Thyroid gland (tissue), 4 donors: ENCODE measurements at regions of chr3 and their contacts with region 1.

Region 1: GRCh38 chr3:59049671-59050331 is at the start of gene CFAP20DC:
- DNase-seq: peak; percentile 88
- H3K4me3 ChIP-seq: peak within 1 kb of the TSS; percentile 3 to 44 (median 38)
- H3K27ac ChIP-seq: no peak within 1 kb of the TSS
- H3K4me1 ChIP-seq: peaks cover 0 to 4% of the 10 kb centered on the region in 2 donors
- H3K27me3 ChIP-seq: no peaks in the 10 kb centered on the region
- CTCF ChIP-seq: no peak
- POLR2A ChIP-seq: peak in 1 of 2 donors; percentile 48
- total RNA-seq, gene CFAP20DC: 0.20 to 0.92 (median 0.60) TPM

Region 2: GRCh38 chr3:58640700-58641372 is 409.0 kb before region 1 on chr3:
- intact Hi-C with region 1: loop called (anchors 5 kb)
- DNase-seq: peak; percentile 90 to 91
- H3K4me3 ChIP-seq: no peak overlapping the region
- H3K27ac ChIP-seq: no peak overlapping the region
- H3K4me1 ChIP-seq: peaks cover 0 to 9% of the 10 kb centered on the region in 2 donors
- H3K27me3 ChIP-seq: no peaks in the 10 kb centered on the region
- CTCF ChIP-seq: peak; percentile 74 to 97 (median 92)
- POLR2A ChIP-seq: no peak

Region 3: DNA sequence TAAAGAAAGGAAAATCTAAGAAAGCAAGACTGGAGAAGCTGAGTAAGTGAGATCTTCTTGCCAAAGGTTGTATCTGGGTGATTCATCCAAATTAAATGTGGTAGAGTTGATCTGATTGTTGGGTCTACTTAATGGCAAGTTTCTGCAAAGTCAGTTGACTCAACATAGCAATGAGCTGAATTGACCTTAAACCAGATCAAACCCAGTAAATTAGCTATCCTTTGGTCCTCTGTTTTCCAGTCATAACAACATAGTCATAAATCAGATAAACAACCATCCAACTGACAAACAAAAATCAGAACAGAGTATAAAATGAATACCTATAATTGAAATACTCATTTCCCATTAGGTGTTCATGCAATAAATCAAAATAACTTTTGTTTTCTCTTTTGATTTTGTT is 142.7 kb after region 1 on chr3:
- intact Hi-C with region 1: no loop called
- DNase-seq: no peak
- H3K4me3 ChIP-seq: no peak overlapping the region
- H3K27ac ChIP-seq: no peak overlapping the region
- H3K4me1 ChIP-seq: no peaks in the 10 kb centered on the region
- H3K27me3 ChIP-seq: no peaks in the 10 kb centered on the region
- CTCF ChIP-seq: no peak
- POLR2A ChIP-seq: no peak

Region 4: GRCh38 chr3:59575113-59576001 is 525.6 kb after region 1 on chr3:
- intact Hi-C with region 1: no loop called
- DNase-seq: peak; percentile 85 to 86
- H3K4me3 ChIP-seq: no peak overlapping the region
- H3K27ac ChIP-seq: no peak overlapping the region
- H3K4me1 ChIP-seq: no peaks in the 10 kb centered on the region
- H3K27me3 ChIP-seq: no peaks in the 10 kb centered on the region
- CTCF ChIP-seq: peak; percentile 78 to 97 (median 89)
- POLR2A ChIP-seq: no peak